PC-9 (cell line): ENCODE measurements at regions of chr18 and their contacts with region 1.

Region 1: GRCh38 chr18:67217551-67218166 is 298.9 kb downstream of the DSEL start:
- DNase-seq: peak; percentile 23 to 38
- H3K4me3 ChIP-seq: no peak overlapping the region
- H3K27ac ChIP-seq: no peak overlapping the region
- H3K4me1 ChIP-seq: no peaks in the 10 kb centered on the region
- H3K27me3 ChIP-seq: no peaks in the 10 kb centered on the region
- CTCF ChIP-seq: peak; percentile 88

Region 2: DNA sequence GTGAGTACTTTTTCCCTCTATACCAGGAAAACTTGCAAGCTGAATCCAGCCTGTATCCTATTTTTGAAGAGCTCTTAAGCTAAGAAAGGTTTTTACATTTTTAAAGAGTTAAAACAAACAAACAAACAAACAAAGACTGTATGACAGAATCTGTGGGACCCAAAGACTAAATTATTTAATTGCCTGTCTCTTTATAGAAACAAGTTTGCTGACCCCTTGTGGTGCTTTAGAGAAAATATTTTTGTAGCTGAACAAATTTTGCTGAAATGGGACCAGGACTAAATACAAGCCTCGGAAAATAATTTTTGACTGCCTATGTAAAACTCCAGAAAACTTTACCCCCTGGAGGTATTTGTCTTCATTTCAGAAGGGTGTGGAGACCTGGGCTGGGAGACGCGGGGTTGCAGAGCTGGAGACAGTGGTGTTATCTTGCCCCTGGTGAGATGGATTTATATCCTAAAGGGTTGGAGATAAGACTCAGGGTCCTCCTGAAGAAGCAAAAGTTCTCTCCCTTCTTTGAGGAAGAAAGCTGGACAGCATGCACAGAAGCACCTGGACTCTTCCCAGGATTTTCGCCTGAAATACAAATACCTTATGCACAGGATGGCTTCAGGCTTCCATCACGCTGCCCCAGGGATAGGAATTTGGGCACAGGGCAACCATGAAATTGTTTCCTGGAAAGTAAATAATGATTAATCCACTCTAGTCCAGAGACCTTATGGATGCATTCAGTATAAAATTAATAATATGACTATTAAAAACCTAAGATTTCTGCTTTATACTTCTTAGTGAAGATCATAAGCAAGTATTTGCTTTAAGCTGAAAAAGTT is 1442.9 kb after region 1 on chr18:
- CTCF ChIA-PET with region 1: no interaction called
- POLR2A ChIA-PET with region 1: no interaction called
- intact Hi-C with region 1: loop called (anchors 1 kb)
- DNase-seq: no peak
- H3K4me3 ChIP-seq: no peak overlapping the region
- H3K27ac ChIP-seq: no peak overlapping the region
- H3K4me1 ChIP-seq: no peaks in the 10 kb centered on the region
- H3K27me3 ChIP-seq: no peaks in the 10 kb centered on the region
- CTCF ChIP-seq: peak; percentile 78

Region 3: DNA sequence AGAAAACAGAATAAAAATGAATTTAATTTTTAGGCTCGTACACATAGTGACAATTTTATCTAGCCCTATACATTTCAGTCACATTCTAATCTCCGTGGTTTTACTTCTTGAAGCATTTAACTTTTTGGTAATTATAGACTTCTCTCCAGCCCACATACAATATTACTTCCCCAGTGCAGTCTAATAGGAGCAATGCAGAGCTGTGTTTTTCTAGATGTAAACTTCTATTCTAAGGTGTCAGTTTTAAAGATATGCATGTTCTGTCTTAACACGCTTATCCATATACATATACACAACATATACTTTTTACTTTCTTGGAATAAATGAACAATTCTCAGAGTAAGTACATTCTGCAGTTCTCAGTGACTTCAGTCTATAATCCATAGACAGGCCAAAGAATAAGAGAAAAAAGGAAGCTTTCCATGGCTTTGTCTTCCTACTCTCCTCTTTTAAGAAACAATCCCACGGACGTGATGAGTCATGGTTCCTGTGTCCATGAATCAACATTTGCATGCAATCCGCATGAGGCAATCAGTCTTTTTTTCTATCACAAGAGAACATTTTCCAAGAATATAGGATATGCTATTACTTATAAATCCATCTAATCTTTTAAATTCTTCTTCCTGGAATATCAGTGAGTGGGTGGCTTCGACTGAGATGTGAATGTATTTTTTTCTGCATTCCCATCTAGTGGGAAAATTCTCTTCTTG is 1623.0 kb after region 1 on chr18:
- CTCF ChIA-PET with region 1: no interaction called
- POLR2A ChIA-PET with region 1: no interaction called
- intact Hi-C with region 1: loop called (anchors 5 kb)
- DNase-seq: peak in 1 of 2 experiments; percentile 5
- H3K4me3 ChIP-seq: no peak overlapping the region
- H3K27ac ChIP-seq: no peak overlapping the region
- H3K4me1 ChIP-seq: no peaks in the 10 kb centered on the region
- H3K27me3 ChIP-seq: no peaks in the 10 kb centered on the region
- CTCF ChIP-seq: no peak